Activated CD8-positive, alpha-beta T cell treated with anti-CD3 and anti-CD28 coated beads for 36 hours (primary cell): ENCODE measurements at regions of chr10 and their contacts with region 1.

Region 1: DNA sequence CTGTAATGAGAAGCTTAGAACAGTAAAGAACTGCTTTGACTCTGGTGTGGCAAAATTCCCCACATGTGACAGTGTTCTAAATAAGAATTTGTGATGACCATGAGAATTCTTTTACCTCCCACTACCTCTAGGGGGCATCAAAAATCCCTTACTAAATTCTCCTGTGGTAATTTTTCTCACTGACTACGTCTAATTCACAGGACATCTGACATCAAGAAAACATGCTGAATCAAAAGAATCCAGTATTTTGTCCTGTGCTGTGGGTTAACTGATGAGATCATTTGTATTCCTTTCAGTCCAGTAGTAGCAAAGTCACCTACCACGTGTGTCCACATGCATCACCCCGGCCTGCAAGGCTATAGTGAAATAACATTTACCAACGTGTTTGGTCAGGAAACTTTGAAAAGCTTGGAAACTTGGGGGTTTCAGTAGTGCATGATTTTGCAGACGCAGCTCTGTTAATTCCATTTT is 103.8 kb downstream of the ATE1 start:
- DNase-seq: peak; percentile 3
- ATAC-seq: peak; percentile 53
- H3K4me3 Mint-ChIP-seq: no peak overlapping the region
- H3K27ac Mint-ChIP-seq: no peak overlapping the region
- H3K4me1 Mint-ChIP-seq: peaks cover 2% of the 10 kb centered on the region
- H3K27me3 Mint-ChIP-seq: no peaks in the 10 kb centered on the region
- CTCF ChIP-seq: peak; percentile 73

Region 2: GRCh38 chr10:121627821-121628581 is 196.0 kb before region 1 on chr10:
- CTCF ChIA-PET with region 1: no interaction called
- POLR2A ChIA-PET with region 1: no interaction called
- intact Hi-C with region 1: no loop called
- DNase-seq: no peak
- ATAC-seq: no peak
- H3K4me3 Mint-ChIP-seq: no peak overlapping the region
- H3K27ac Mint-ChIP-seq: no peak overlapping the region
- H3K4me1 Mint-ChIP-seq: no peaks in the 10 kb centered on the region
- H3K27me3 Mint-ChIP-seq: no peaks in the 10 kb centered on the region
- CTCF ChIP-seq: no peak

Region 3: GRCh38 chr10:121838149-121838548 is 14.1 kb after region 1 on chr10:
- CTCF ChIA-PET with region 1: interaction called, 15 read pairs
- POLR2A ChIA-PET with region 1: interaction called, 3 read pairs
- intact Hi-C with region 1: no loop called
- DNase-seq: no peak
- ATAC-seq: no peak
- H3K4me3 Mint-ChIP-seq: no peak overlapping the region
- H3K27ac Mint-ChIP-seq: no peak overlapping the region
- H3K4me1 Mint-ChIP-seq: peaks cover 7% of the 10 kb centered on the region
- H3K27me3 Mint-ChIP-seq: no peaks in the 10 kb centered on the region
- CTCF ChIP-seq: no peak

Region 4: GRCh38 chr10:121900443-121901174 is 76.6 kb after region 1 on chr10:
- CTCF ChIA-PET with region 1: interaction called, 23 read pairs
- POLR2A ChIA-PET with region 1: no interaction called
- intact Hi-C with region 1: no loop called
- DNase-seq: peak; percentile 5
- ATAC-seq: peak; percentile 70
- H3K4me3 Mint-ChIP-seq: no peak overlapping the region
- H3K27ac Mint-ChIP-seq: no peak overlapping the region
- H3K4me1 Mint-ChIP-seq: peaks cover 2% of the 10 kb centered on the region
- H3K27me3 Mint-ChIP-seq: no peaks in the 10 kb centered on the region
- CTCF ChIP-seq: peak; percentile 94